ENCODE measurements at regions of chr7 and their contacts with region 1.

Region 1: DNA sequence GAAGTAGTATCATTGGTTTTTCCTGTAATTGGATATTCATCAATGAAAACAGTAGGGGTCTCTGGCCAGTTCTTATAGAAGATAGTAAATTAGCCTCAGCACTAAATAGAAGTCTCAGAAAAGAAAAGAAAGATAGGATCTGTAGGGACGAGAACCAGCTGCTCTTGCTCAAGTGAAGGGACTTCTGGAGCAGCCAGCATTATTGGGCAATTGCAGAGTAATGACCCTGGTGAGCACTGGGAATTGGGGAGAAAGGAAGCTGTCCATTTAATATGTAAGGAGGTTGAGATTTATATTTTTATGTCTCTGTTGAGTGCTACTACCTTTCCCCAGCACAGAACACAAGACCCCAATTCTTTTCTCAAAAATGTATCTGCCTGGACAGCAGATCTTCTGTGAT is 61.2 kb upstream of the WNT16 start:
- DNase-seq: no peak
- H3K4me3 ChIP-seq: no peak overlapping the region
- H3K27ac ChIP-seq: no peak overlapping the region
- H3K4me1 ChIP-seq: no peaks in the 10 kb centered on the region
- H3K27me3 ChIP-seq: peaks cover 4% of the 10 kb centered on the region
- CTCF ChIP-seq: no peak

Region 2: DNA sequence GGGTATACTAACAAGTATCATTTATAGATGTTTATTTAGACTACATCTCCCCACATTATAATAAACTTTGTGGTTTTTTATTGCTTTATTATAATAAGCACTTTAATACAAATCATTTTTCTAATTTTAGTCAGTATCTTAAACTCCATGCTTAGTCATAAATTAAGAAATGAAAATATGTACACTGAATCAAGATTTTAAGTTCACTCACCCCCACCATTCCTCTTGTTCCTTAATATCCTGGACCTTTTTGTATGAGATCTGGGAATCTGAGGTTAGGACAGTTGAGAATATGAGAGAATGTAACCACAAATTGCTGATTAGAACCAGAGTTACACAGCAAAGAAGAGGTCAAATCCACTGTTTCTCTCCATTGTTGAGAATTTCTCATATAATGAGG is 32.4 kb before region 1 on chr7:
- CTCF ChIA-PET with region 1: no interaction called
- dilution Hi-C with region 1: no loop called
- in situ Hi-C with region 1: no loop called
- intact Hi-C with region 1: no loop called
- DNase-seq: no peak
- H3K4me3 ChIP-seq: no peak overlapping the region
- H3K27ac ChIP-seq: no peak overlapping the region
- H3K4me1 ChIP-seq: no peaks in the 10 kb centered on the region
- H3K27me3 ChIP-seq: no peaks in the 10 kb centered on the region
- CTCF ChIP-seq: no peak

Region 3: GRCh38 chr7:121302214-121302745 is 34.7 kb after region 1 on chr7:
- CTCF ChIA-PET with region 1: no interaction called
- dilution Hi-C with region 1: loop called (anchors 5 kb)
- in situ Hi-C with region 1: no loop called
- intact Hi-C with region 1: no loop called
- DNase-seq: no peak
- H3K4me3 ChIP-seq: no peak overlapping the region
- H3K27ac ChIP-seq: no peak overlapping the region
- H3K4me1 ChIP-seq: peaks cover 18% of the 10 kb centered on the region
- H3K27me3 ChIP-seq: no peaks in the 10 kb centered on the region
- CTCF ChIP-seq: no peak